ENCODE measurements at regions of chr6 and their contacts with region 1.

Region 1: GRCh38 chr6:134640975-134641429 is 308.9 kb downstream of the ALDH8A1 start:
- H3K4me3 ChIP-seq: no peak overlapping the region
- H3K27ac ChIP-seq: no peak overlapping the region
- H3K4me1 ChIP-seq: no peaks in the 10 kb centered on the region
- CTCF ChIP-seq: peak; percentile 68

Region 2: GRCh38 chr6:134161036-134161435 is 480.0 kb before region 1 on chr6:
- CTCF ChIA-PET with region 1: interaction called, 15 read pairs
- POLR2A ChIA-PET with region 1: no interaction called
- H3K4me3 ChIP-seq: no peak overlapping the region
- H3K27ac ChIP-seq: no peak overlapping the region
- H3K4me1 ChIP-seq: no peaks in the 10 kb centered on the region
- CTCF ChIP-seq: no peak

Region 3: DNA sequence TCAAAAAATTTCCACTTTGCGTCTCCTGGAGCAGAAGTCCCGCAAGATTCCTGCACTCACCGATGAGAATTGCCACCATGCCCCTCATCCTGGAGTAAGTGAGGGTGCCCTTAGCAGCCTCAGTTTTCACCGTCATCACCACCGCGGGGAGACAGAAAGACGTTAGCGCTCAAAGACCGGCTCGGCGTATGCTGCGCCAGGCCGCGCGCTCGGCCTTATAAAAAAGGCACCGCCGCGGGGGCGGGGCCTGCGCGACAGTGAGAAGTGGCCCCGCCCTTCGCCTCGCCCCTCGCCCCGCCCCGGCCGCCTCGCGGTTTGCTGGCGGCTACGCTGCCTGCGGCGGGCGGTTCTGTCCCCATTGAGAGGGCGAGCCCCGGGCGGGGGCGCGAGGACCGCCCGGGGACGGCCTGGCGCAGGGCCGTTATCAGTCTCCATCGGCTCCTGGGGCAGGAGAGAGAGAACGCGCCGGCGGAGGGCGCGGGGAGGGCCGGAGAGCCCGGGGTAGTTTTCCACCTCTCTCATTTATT is 466.3 kb before region 1 on chr6:
- CTCF ChIA-PET with region 1: interaction called, 47 read pairs
- POLR2A ChIA-PET with region 1: interaction called, 7 read pairs
- H3K4me3 ChIP-seq: peak overlapping the region; percentile 73
- H3K27ac ChIP-seq: peak overlapping the region; percentile 85
- H3K4me1 ChIP-seq: no peaks in the 10 kb centered on the region
- CTCF ChIP-seq: peak; percentile 2; the same call in 1 of the 2 replicates

Region 4: GRCh38 chr6:134446218-134446848 is 194.7 kb before region 1 on chr6:
- CTCF ChIA-PET with region 1: no interaction called
- POLR2A ChIA-PET with region 1: no interaction called
- H3K4me3 ChIP-seq: no peak overlapping the region
- H3K27ac ChIP-seq: no peak overlapping the region
- H3K4me1 ChIP-seq: no peaks in the 10 kb centered on the region
- CTCF ChIP-seq: no peak

Region 5: DNA sequence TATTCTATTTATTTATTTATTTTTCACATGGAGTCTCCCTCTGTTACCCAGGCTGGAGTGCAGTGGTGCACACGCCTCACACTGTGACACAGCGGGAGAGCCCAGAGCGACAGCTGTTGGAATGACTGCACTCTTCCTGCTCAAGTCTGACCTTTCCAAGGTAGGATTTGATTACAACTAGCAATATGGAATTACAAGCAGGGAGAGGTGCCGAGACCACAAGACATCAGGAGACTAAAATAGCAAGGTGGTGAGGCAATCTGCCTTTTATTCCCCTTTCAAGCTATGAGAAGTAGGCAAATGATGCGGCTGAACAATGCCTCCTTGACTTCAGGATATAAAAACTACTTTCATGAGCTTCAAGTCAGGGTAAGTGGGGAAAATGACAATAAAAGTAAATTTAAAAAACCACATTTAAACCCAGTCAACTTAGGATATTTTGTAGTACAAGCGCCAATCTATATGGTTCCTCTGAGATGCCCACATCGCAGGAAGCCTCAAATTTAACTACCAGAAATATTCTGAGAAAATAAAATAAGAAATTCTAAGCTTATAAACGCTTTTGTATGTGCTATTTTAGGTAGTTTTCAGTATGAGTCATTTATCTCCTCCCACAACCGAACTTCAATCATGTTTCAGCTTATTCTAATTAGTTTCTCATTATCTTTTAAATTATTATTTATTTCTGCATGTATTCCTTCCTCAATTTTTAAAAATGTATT is 176.2 kb before region 1 on chr6:
- CTCF ChIA-PET with region 1: interaction called, 30 read pairs
- POLR2A ChIA-PET with region 1: no interaction called
- H3K4me3 ChIP-seq: no peak overlapping the region
- H3K27ac ChIP-seq: no peak overlapping the region
- H3K4me1 ChIP-seq: peaks cover 13% of the 10 kb centered on the region
- CTCF ChIP-seq: no peak

Region 6: DNA sequence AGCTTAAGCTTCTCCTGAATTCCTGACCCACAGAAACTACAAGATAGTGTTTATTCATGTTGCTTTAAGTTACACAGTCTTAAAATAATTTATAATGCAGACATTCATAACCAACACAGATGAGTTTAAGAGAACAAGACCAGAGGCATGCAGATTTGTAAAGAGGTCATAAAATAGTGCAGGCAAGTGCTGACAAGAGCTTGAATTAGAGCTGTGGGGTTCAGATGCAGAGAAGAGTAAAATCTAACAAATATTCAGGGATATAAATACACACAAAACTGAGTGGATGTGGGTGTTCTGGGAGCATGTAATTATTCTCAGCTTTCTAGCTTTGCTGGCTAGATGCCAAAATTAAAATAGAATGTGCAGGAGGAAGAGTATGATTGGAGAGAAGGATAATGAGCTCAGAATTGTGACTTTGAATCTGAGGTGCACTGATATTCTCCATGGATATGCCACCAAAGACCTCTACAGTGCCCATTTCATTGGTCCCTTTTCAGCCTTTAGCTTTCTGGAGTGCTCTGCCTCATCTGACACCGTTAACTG is 31.2 kb before region 1 on chr6:
- CTCF ChIA-PET with region 1: no interaction called
- POLR2A ChIA-PET with region 1: no interaction called
- H3K4me3 ChIP-seq: no peak overlapping the region
- H3K27ac ChIP-seq: no peak overlapping the region
- H3K4me1 ChIP-seq: 0 out of 2 replicates have a peak, but pooled peaks cover 2% of the 10 kb centered on the region
- CTCF ChIP-seq: no peak

Region 7: GRCh38 chr6:134630508-134631121 is 10.4 kb before region 1 on chr6:
- CTCF ChIA-PET with region 1: interaction called, 18 read pairs
- POLR2A ChIA-PET with region 1: no interaction called
- H3K4me3 ChIP-seq: no peak overlapping the region
- H3K27ac ChIP-seq: no peak overlapping the region
- H3K4me1 ChIP-seq: no peaks in the 10 kb centered on the region
- CTCF ChIP-seq: no peak

Region 8: DNA sequence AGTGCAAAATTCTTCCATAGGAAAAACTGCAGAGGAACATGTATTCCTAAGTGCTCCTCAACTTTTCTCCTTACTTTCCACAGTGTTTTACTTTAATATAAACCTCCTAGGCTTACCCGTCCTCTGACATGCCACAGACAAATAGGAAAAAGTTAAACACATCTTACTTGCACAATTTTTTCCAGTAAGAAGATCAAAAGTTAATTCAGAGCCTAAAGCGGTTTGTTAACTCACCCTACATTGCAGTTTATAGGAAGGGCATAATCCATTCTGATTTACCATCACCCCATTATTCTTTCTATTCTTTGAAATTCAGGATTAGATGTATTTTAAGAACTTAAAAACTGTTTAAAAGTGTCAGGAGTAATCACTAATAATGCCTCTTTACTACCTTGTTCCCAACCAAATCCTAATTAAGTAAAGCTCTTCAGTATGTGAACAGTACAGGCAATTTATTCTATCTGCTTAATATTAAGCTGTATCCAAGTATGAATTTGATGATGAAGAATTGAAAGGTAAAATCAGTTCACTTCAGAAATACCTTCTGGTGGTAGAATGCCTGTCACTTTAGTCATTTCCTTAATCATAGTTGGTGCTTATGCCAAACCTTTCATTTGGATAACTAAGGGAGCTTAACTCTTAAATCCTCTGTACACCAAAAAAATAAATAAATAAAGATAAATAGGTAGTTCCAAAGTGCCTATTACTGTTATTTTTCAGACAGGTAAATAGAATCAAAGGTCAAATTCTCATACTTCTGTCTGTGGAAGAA is 16.9 kb after region 1 on chr6:
- CTCF ChIA-PET with region 1: interaction called, 15 read pairs
- POLR2A ChIA-PET with region 1: no interaction called
- H3K4me3 ChIP-seq: no peak overlapping the region
- H3K27ac ChIP-seq: no peak overlapping the region
- H3K4me1 ChIP-seq: no peaks in the 10 kb centered on the region
- CTCF ChIP-seq: no peak

Region 9: DNA sequence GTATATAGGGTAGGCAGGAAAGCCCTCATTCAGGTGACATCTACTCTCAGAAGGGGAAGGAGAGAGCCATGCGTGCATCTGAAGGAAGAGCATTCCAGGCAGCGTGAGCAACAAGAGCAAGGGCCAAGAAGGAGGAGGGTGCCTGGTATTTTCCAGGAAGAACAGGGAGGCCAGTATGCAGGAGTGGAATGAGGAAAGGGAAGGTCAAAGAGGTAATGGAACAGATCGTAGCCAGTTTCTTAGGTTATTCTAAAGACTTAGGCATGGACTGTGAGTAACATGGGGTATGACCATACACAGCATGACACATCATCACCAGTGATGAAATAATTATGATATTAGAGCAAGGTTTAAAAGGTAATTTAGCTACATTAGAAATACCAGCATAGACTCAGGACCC is 284.8 kb after region 1 on chr6:
- CTCF ChIA-PET with region 1: no interaction called
- POLR2A ChIA-PET with region 1: no interaction called
- H3K4me3 ChIP-seq: no peak overlapping the region
- H3K27ac ChIP-seq: no peak overlapping the region
- H3K4me1 ChIP-seq: no peaks in the 10 kb centered on the region
- CTCF ChIP-seq: no peak

Region 10: DNA sequence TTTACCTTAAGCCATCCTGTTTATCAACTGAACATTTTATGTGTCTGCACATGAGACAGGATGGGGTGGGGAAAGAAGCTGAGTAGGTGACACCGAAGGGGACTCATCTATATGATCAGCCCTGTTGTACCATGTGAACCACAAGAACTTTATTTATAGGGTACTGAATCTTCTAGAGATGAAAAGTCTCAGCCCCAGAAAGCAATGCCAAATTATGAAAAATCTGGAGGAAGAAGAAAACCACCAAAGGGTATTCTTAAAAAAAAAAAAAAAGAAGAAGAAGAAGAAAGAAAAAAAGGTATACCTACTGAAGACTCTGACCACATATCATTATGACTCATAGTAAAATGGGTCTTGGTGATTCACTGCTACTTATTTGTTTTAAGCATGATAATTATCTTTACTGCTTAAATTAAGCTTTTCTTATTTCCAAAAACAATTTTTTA is 453.4 kb after region 1 on chr6:
- CTCF ChIA-PET with region 1: no interaction called
- POLR2A ChIA-PET with region 1: no interaction called
- H3K4me3 ChIP-seq: no peak overlapping the region
- H3K27ac ChIP-seq: no peak overlapping the region
- H3K4me1 ChIP-seq: peaks cover 3% of the 10 kb centered on the region; the same call in 1 of the 2 replicates
- CTCF ChIP-seq: no peak